A673 (cell line): ENCODE measurements at regions of chr4 and their contacts with region 1.

Region 1: DNA sequence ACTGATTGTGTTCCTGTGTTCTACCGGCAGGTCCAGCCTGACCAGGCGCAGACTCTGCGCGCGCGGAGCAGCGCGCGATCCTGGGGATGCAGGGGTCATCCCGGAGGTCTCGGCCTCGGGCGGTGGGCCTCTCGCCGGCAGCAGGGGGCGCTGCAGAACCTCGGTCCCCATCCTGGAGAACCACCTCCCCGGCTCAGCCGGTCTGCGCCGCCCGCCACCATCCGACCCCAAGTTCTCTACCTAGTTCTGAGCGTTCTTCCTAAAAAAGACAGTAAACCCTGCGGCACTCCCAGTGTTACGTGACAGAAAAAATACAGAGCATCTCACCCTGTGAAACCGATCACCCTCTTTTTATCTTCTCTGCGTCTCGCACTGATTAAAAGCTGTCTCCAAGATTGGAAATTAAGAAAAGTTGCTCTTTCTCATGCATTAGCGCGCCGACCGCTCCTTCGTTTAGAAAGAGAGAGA is 1.6 kb downstream of the TRPC3 start:
- DNase-seq: peak; percentile 72
- H3K4me3 ChIP-seq: peak overlapping the region; percentile 54
- H3K27ac ChIP-seq: no peak overlapping the region
- H3K4me1 ChIP-seq: no peaks in the 10 kb centered on the region
- H3K27me3 ChIP-seq: peaks cover 40% of the 10 kb centered on the region
- CTCF ChIP-seq: peak; percentile 93

Region 2: GRCh38 chr4:122218762-122219161 is 268.5 kb after region 1 on chr4:
- CTCF ChIA-PET with region 1: no interaction called
- POLR2A ChIA-PET with region 1: no interaction called
- intact Hi-C with region 1: loop called (anchors 5 kb)
- DNase-seq: peak; percentile 40
- H3K4me3 ChIP-seq: no peak overlapping the region
- H3K27ac ChIP-seq: no peak overlapping the region
- H3K4me1 ChIP-seq: no peaks in the 10 kb centered on the region
- H3K27me3 ChIP-seq: no peaks in the 10 kb centered on the region
- CTCF ChIP-seq: peak; percentile 50

Region 3: GRCh38 chr4:122412547-122412946 is 462.3 kb after region 1 on chr4:
- CTCF ChIA-PET with region 1: no interaction called
- POLR2A ChIA-PET with region 1: no interaction called
- intact Hi-C with region 1: no loop called
- DNase-seq: no peak
- H3K4me3 ChIP-seq: no peak overlapping the region
- H3K27ac ChIP-seq: no peak overlapping the region
- H3K4me1 ChIP-seq: no peaks in the 10 kb centered on the region
- H3K27me3 ChIP-seq: no peaks in the 10 kb centered on the region
- CTCF ChIP-seq: no peak

Region 4: GRCh38 chr4:122450847-122451246 is 500.6 kb after region 1 on chr4:
- CTCF ChIA-PET with region 1: no interaction called
- POLR2A ChIA-PET with region 1: no interaction called
- intact Hi-C with region 1: loop called (anchors 5 kb)
- DNase-seq: peak; percentile 64
- H3K4me3 ChIP-seq: no peak overlapping the region
- H3K27ac ChIP-seq: no peak overlapping the region
- H3K4me1 ChIP-seq: no peaks in the 10 kb centered on the region
- H3K27me3 ChIP-seq: no peaks in the 10 kb centered on the region
- CTCF ChIP-seq: peak; percentile 57